ENCODE measurements at regions of chr2 and their contacts with region 1.

Region 1: GRCh38 chr2:226799181-226799975 is at the start of gene IRS1:
- DNase-seq: peak; percentile 74
- H3K4me3 Mint-ChIP-seq: peak within 1 kb of the TSS; percentile 80
- H3K27ac Mint-ChIP-seq: peak within 1 kb of the TSS; percentile 38
- H3K4me1 Mint-ChIP-seq: peaks cover 24% of the 10 kb centered on the region
- H3K27me3 Mint-ChIP-seq: peaks cover 13% of the 10 kb centered on the region
- total RNA-seq, gene IRS1: 2.0 to 2.1 TPM

Region 2: GRCh38 chr2:225889446-225889850 is 909.9 kb before region 1 on chr2:
- CTCF ChIA-PET with region 1: interaction called, 23 read pairs
- POLR2A ChIA-PET with region 1: no interaction called
- intact Hi-C with region 1: no loop called
- DNase-seq: no peak
- H3K4me3 Mint-ChIP-seq: no peak overlapping the region
- H3K27ac Mint-ChIP-seq: no peak overlapping the region
- H3K4me1 Mint-ChIP-seq: no peaks in the 10 kb centered on the region
- H3K27me3 Mint-ChIP-seq: peaks cover 4% of the 10 kb centered on the region

Region 3: GRCh38 chr2:226423498-226423960 is 375.8 kb before region 1 on chr2:
- CTCF ChIA-PET with region 1: no interaction called
- POLR2A ChIA-PET with region 1: no interaction called
- intact Hi-C with region 1: loop called (anchors 2 kb)
- DNase-seq: peak; percentile 66
- H3K4me3 Mint-ChIP-seq: peak overlapping the region; percentile 5
- H3K27ac Mint-ChIP-seq: no peak overlapping the region
- H3K4me1 Mint-ChIP-seq: peaks cover 15% of the 10 kb centered on the region
- H3K27me3 Mint-ChIP-seq: peaks cover 11% of the 10 kb centered on the region

Region 4: DNA sequence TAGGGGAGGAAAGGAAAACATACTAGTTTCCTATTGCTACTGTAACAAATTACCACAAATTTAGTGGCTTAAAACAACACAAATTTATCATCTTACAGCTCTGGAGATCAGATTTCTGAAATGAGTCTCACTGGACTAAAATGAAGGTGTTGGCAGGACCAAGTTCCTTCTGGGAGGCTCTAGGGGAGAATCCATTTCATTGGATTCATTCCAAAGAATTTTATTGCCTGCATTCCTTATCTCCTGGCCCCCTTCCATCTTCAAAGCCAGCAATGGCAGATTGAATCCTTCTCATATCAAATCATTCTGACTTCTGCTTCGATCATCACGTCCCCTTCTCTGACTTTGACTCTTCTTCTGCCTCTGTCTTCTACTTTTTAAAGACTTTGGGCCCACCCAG is 250.6 kb before region 1 on chr2:
- CTCF ChIA-PET with region 1: no interaction called
- POLR2A ChIA-PET with region 1: no interaction called
- intact Hi-C with region 1: no loop called
- DNase-seq: no peak
- H3K4me3 Mint-ChIP-seq: no peak overlapping the region
- H3K27ac Mint-ChIP-seq: no peak overlapping the region
- H3K4me1 Mint-ChIP-seq: no peaks in the 10 kb centered on the region
- H3K27me3 Mint-ChIP-seq: no peaks in the 10 kb centered on the region

Region 5: DNA sequence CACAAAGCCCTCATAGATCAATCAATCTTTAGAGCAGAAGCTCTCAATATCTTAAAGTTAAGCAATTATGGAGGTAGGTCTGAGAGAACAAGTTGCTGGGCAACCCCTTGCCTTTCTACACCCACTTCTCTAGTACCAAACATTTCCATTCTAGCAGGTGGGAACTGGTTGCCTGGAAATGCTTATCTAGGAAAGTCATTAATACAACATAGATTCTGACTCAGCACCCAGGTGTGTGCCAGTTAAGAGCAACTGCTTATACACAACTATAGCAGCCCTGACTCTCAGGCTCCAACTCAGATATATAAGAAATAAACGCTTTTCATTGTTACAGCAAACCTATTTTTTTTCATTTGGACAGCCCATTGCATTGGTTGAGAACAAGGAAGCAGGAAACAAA is 237.4 kb before region 1 on chr2:
- CTCF ChIA-PET with region 1: no interaction called
- POLR2A ChIA-PET with region 1: no interaction called
- intact Hi-C with region 1: loop called (anchors 10 kb)
- DNase-seq: no peak
- H3K4me3 Mint-ChIP-seq: no peak overlapping the region
- H3K27ac Mint-ChIP-seq: no peak overlapping the region
- H3K4me1 Mint-ChIP-seq: no peaks in the 10 kb centered on the region
- H3K27me3 Mint-ChIP-seq: peaks cover 12% of the 10 kb centered on the region

Region 6: DNA sequence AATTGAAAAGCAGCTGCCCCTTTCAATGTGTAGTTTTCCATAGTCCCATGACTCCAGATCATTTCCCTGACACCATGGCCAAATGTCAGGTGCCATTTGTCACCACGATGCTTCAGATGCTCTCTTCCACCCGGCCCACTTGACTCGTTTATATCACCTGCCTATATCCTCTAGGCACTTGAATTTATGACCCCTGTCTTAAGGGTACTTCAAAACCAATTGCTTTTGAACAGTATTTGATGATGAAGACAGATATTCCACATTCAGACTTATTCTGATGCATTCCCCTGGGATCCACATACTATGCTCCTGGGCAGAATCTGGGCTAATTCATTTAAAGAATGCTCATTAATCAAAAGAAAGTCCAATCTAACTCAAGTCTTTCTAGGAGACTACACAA is 19.6 kb after region 1 on chr2:
- CTCF ChIA-PET with region 1: interaction called, 10 read pairs
- POLR2A ChIA-PET with region 1: no interaction called
- intact Hi-C with region 1: no loop called
- DNase-seq: no peak
- H3K4me3 Mint-ChIP-seq: no peak overlapping the region
- H3K27ac Mint-ChIP-seq: no peak overlapping the region
- H3K4me1 Mint-ChIP-seq: no peaks in the 10 kb centered on the region
- H3K27me3 Mint-ChIP-seq: peaks cover 6% of the 10 kb centered on the region

Region 7: DNA sequence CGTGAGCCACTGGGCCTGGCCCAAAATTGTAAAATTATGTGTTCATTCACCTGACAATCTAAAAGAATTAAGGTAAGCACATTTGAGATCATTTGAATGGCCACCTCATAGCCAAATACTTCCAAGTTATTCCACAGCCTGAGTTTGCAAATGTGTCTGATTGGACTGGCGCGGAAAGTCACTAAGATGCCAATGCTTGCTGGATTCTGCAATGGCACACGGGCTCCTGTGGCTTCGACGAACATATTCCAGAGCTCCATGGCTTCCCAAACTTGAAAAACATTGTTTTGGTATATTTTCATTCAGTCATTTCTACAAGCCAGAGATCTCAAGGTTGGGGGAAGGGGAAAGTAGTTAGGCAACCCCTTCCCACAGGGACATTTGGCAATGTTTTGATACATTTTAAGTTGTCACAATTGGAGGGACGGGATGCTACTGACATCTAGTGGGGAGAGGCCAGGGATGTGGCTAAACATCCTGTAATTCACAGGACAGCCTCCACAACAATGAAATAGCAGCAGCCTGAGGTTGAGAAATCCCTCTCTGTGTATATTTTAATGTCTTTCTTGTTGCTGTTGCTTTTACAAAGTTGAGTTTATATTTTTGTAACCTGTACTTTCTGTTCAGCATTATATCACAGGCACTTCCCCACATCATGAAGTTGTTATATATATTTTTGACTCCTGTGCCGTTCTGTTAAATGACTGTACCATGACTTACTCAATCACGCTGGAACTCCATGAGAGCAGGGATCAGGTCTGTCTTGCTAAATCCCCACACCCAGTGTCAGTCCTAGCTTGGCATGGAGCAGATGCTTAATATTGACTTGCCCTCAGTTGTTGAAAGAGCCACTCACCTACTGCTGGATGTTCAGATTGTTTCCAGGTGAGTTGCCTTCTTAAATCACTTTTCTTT is 307.7 kb after region 1 on chr2:
- CTCF ChIA-PET with region 1: interaction called, 3 read pairs
- POLR2A ChIA-PET with region 1: no interaction called
- intact Hi-C with region 1: loop called (anchors 5 kb)
- DNase-seq: peak; percentile 56
- H3K4me3 Mint-ChIP-seq: no peak overlapping the region
- H3K27ac Mint-ChIP-seq: no peak overlapping the region
- H3K4me1 Mint-ChIP-seq: no peaks in the 10 kb centered on the region
- H3K27me3 Mint-ChIP-seq: peaks cover 2% of the 10 kb centered on the region

Measured in activated CD4-positive, alpha-beta memory T cell treated with anti-CD3 and anti-CD28 coated beads for 36 hours (primary cell).